Cardiac septum (tissue), 1 donor: ENCODE measurements at regions of chr17 and their contacts with region 1.

Region 1: DNA sequence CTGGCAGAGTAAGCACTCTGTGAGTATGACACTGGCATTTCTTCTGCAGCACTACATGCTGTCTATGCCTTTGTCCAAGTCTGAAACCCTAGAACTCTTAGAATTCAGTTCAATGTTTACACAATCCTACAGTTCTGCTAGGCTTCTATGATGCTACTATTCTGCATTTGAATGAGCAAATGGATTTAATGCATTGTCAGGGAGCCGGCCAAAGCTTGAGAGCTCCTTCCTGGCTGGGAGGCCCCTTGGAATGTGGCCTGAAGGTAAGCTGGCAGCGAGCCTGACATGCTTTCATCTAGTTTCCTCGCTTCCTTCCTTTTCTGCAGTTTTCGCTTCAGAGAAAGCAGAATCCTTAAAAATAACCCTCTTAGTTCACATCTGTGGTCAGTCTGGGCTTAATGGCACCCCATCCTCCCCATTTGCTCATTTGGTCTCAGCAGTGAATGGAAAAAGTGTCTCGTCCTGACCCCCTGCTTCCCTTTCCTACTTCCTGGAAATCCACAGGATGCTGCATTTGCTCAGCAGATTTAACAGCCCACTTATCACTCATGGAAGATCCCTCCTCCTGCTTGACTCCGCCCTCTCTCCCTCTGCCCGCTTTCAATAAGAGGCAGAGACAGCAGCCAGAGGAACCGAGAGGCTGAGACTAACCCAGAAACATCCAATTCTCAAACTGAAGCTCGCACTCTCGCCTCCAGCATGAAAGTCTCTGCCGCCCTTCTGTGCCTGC is at the start of gene CCL2:
- DNase-seq: peak; percentile 77
- total RNA-seq, gene CCL2: 42.3 TPM

Region 2: DNA sequence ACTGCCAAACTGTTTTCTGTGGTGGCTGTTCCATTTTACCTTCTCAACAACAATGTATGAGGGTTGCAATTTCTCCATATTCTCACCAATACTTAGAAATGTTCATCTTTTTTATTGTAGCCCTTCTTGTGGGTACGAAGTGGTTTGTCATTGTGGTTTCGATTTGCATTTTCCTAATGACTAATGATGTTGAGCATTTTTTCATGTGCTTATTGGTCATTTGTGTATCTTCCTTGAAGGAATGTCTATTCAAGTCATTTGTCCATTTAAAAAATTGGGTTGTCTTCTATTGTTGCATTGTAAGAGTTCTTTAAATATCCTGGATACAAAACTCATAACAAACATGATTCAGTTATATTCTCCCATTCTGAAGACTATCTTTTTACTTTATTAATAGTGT is 47.2 kb before region 1 on chr17:
- intact Hi-C with region 1: no loop called
- DNase-seq: no peak

Region 3: DNA sequence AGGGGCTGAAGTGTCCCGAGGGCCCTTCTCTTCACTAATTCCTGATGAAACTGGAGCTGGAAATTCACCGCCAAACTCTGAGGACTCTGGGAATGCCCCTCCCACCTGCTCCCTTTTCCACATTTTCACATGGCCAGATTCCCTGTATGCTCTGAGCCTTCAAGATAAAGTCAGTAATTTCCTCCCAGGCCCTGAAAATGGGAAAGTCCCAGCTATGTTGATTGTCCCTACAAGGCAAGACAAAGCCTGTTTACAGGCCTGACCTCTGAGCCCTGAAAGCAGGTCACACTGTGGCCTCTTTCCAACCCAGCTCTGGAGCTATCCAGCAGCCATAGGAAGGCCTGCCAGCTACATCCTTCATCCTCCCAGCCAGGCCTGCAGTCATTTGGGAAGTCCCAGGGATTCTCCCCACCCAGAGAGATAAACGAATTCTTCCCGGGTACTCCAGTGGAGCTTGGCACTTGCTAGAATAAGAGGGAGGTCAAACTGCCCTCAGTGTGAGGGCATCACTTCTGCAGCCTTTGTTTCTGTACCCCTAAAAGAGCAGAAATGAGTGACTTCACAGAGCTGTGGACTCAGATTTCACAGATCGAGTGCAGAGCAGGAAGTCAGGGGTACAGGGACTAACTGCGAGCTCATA is 19.3 kb before region 1 on chr17:
- intact Hi-C with region 1: loop called (anchors 1 kb)
- DNase-seq: peak; percentile 86

Region 4: DNA sequence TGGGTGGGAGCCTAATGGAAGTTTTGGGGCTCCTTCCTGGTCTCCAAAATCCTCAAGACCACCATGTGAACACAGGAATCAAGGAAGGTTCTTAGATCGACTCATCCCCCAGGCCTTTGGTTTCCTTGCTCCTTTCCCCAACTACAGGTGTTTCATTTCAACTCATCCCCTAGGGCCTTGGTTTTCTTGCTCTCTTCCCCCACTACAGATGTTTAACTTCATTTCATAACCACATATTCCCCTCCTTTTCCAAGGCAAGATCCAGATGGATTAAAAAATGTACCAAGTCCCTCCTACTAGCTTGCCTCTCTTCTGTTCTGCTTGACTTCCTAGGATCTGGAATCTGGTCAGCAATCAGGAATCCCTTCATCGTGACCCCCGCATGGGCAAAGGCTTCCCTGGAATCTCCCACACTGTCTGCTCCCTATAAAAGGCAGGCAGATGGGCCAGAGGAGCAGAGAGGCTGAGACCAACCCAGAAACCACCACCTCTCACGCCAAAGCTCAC is 30.5 kb after region 1 on chr17 and contains the start of gene CCL11:
- intact Hi-C with region 1: loop called (anchors 1 kb)
- DNase-seq: no peak
- total RNA-seq, gene CCL11: 3.2 TPM

Region 5: GRCh38 chr17:34306466-34306865 is 51.6 kb after region 1 on chr17:
- intact Hi-C with region 1: loop called (anchors 5 kb)
- DNase-seq: no peak